ENCODE measurements at regions of chr10 and their contacts with region 1.

Region 1: GRCh38 chr10:13299437-13300287 is at the start of gene PHYH:
- DNase-seq: peak; percentile 88
- ATAC-seq: peak; percentile 71
- H3K4me3 ChIP-seq: peak within 1 kb of the TSS in 4 of 5 experiments; percentile 59 to 68 (median 66)
- H3K4me3 Mint-ChIP-seq: peak within 1 kb of the TSS; percentile 88
- H3K27ac ChIP-seq: peak within 1 kb of the TSS; percentile 66 to 71
- H3K27ac Mint-ChIP-seq: peak within 1 kb of the TSS; percentile 83
- H3K4me1 ChIP-seq: peaks cover 9 to 25% of the 10 kb centered on the region in 2 donors
- H3K4me1 Mint-ChIP-seq: peaks cover 20% of the 10 kb centered on the region
- H3K27me3 ChIP-seq: no peaks in the 10 kb centered on the region
- H3K27me3 Mint-ChIP-seq: no peaks in the 10 kb centered on the region
- CTCF ChIP-seq: no peak
- total RNA-seq, gene PHYH: 9.7 and 14.9 TPM in 2 replicates

Region 2: GRCh38 chr10:12264204-12264940 is 1035.3 kb before region 1 on chr10:
- CTCF ChIA-PET with region 1: no interaction called
- POLR2A ChIA-PET with region 1: interaction called, 14 read pairs
- intact Hi-C with region 1: no loop called
- DNase-seq: peak; percentile 99
- ATAC-seq: peak; percentile 89
- H3K4me3 ChIP-seq: peak overlapping the region in 4 of 5 experiments; percentile 18 to 34 (median 22)
- H3K4me3 Mint-ChIP-seq: peak overlapping the region; percentile 79
- H3K27ac ChIP-seq: peak overlapping the region; percentile 86 to 100
- H3K27ac Mint-ChIP-seq: peak overlapping the region; percentile 99
- H3K4me1 ChIP-seq: peaks cover 51 to 62% of the 10 kb centered on the region in 2 donors
- H3K4me1 Mint-ChIP-seq: peaks cover 50% of the 10 kb centered on the region
- H3K27me3 ChIP-seq: no peaks in the 10 kb centered on the region
- H3K27me3 Mint-ChIP-seq: no peaks in the 10 kb centered on the region
- CTCF ChIP-seq: peak; percentile 56

Region 3: DNA sequence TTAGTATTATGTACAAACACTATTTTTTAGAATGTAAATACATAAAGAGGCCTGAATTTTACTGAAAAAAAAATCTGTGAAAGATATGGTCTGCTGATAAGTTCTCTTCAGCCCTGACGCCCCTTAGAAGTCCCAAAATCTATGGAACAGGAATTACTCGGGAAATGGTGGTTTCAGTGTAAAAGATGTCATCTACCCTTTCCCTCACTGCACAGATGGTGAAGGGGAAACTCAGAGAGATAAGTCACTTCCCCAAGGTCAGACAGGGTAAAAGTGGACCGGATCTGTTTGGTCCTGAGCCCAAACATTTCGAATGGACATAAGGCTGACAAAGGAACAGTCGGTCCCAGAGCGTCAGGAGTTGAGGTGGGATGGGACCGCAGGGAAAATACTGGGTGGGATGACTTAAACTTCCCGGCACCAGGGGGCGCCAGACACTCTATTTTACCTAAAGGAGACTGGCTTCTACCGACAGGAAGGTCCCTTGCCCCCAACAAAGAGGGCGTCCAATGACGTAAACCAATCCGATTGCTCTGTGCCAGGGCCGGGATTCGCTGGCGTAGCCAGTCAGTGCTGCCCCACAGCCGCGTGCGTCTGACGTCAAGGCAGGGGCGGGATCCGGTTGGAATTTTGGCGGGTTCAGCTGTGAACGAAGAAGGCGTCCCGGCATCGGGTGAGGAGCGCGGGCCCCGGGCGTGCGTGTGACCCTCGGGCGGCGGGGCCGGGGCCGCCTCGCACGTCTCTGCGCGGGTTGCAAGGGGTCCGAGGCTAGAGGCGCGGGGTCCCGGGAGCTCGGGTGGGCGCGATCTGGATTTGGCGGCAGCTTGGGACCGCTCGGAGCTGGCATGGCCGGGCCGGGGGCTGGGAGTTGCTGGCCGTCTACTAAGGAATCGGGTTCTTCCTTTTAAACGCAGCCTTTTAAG is 138.5 kb before region 1 on chr10 and contains the start of gene MCM10:
- CTCF ChIA-PET with region 1: interaction called, 36 read pairs
- POLR2A ChIA-PET with region 1: interaction called, 5 read pairs
- intact Hi-C with region 1: loop called (anchors 1 kb)
- DNase-seq: peak; percentile 97
- ATAC-seq: peak; percentile 100
- H3K4me3 ChIP-seq: peak within 1 kb of the TSS; percentile 34 to 82 (median 63)
- H3K4me3 Mint-ChIP-seq: peak within 1 kb of the TSS; percentile 93
- H3K27ac ChIP-seq: peak within 1 kb of the TSS in 1 of 2 donors; percentile 54
- H3K27ac Mint-ChIP-seq: peak within 1 kb of the TSS; percentile 81
- H3K4me1 ChIP-seq: peaks cover 10 to 12% of the 10 kb centered on the region in 2 donors
- H3K4me1 Mint-ChIP-seq: peaks cover 14% of the 10 kb centered on the region
- H3K27me3 ChIP-seq: no peaks in the 10 kb centered on the region
- H3K27me3 Mint-ChIP-seq: no peaks in the 10 kb centered on the region
- CTCF ChIP-seq: peak; percentile 89
- total RNA-seq, gene MCM10: 0.15 and 0.42 TPM in 2 replicates

Region 4: GRCh38 chr10:13271552-13272163 is 28.0 kb before region 1 on chr10:
- CTCF ChIA-PET with region 1: interaction called, 14 read pairs
- POLR2A ChIA-PET with region 1: interaction called, 4 read pairs
- intact Hi-C with region 1: loop called (anchors 1 kb)
- DNase-seq: peak; percentile 49
- ATAC-seq: peak; percentile 73
- H3K4me3 ChIP-seq: peak overlapping the region in 2 of 5 experiments; percentile 9 to 22
- H3K4me3 Mint-ChIP-seq: peak overlapping the region; percentile 59
- H3K27ac ChIP-seq: no peak overlapping the region
- H3K27ac Mint-ChIP-seq: peak overlapping the region; percentile 53
- H3K4me1 ChIP-seq: no peaks in the 10 kb centered on the region
- H3K4me1 Mint-ChIP-seq: peaks cover 2% of the 10 kb centered on the region
- H3K27me3 ChIP-seq: no peaks in the 10 kb centered on the region
- H3K27me3 Mint-ChIP-seq: no peaks in the 10 kb centered on the region
- CTCF ChIP-seq: peak; percentile 46

Region 5: DNA sequence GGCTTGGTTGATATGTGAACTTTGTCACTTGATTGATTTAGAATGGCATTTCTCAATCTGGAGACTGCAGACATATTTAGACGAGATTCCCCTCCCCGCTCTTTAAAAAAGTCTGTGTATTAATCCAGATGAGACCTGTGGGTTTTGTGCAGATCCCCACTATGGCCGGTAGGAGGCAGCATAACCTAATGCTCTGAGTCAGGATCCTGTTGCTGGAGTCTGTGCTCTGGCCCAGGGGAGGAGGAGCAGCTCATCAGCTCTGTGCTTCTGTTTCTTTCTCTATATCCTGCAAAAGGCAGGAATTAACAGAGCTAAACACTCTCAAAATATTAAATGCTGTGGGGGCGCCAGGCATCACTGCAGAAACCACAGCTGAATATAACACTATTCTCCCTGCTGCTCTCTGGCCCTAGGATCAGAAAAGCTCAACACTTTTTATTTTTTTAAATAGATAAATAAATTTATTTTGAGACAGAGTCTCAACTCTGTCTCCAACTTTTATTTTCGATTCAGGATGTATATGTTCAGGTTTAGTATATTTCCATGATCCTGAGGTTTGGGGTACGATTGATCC is 72.3 kb after region 1 on chr10:
- CTCF ChIA-PET with region 1: no interaction called
- POLR2A ChIA-PET with region 1: no interaction called
- intact Hi-C with region 1: no loop called
- DNase-seq: peak; percentile 84
- ATAC-seq: peak; percentile 96
- H3K4me3 ChIP-seq: no peak overlapping the region
- H3K4me3 Mint-ChIP-seq: no peak overlapping the region
- H3K27ac ChIP-seq: no peak overlapping the region
- H3K27ac Mint-ChIP-seq: no peak overlapping the region
- H3K4me1 ChIP-seq: no peaks in the 10 kb centered on the region
- H3K4me1 Mint-ChIP-seq: no peaks in the 10 kb centered on the region
- H3K27me3 ChIP-seq: no peaks in the 10 kb centered on the region
- H3K27me3 Mint-ChIP-seq: peaks cover 4% of the 10 kb centered on the region
- CTCF ChIP-seq: peak; percentile 95

Region 6: DNA sequence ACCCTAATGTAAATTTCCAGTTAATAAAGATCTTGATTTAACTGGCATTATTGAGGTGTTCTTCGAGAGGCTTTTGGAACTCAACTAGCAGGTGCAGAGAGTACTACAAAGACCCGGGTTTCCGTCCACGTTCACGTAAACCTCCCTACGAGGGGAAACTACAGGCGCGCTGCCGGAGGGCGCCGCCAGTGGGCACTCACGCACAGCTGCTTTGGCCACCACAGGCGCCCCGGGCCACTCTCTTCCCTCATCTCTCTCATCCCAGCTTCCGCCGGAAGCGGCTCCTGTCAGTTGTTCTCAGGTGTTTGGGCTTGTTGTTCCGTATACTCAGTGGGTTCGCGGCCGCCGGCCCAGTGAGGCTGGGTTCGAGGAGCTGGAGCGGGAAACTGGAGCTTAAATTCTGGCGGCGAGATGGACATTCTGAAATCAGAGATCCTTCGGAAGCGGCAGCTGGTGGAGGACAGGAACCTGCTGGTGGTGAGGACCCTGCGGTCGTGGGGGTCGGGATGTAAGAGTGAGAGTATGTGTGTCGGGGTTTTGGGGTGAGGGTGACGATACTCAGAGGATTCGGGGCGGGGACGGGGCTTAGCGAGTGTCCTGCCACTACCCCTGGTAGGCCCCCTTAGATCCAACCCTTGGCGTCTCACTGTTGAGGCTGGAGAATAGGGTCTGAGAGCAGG is 287.2 kb after region 1 on chr10 and contains the start of gene PRPF18:
- CTCF ChIA-PET with region 1: no interaction called
- POLR2A ChIA-PET with region 1: interaction called, 4 read pairs
- intact Hi-C with region 1: loop called (anchors 1 kb)
- DNase-seq: peak; percentile 95
- ATAC-seq: peak; percentile 100
- H3K4me3 ChIP-seq: peak within 1 kb of the TSS; percentile 53 to 99 (median 84)
- H3K4me3 Mint-ChIP-seq: peak within 1 kb of the TSS; percentile 95
- H3K27ac ChIP-seq: peak within 1 kb of the TSS; percentile 0 to 85
- H3K27ac Mint-ChIP-seq: peak within 1 kb of the TSS; percentile 90
- H3K4me1 ChIP-seq: peaks cover 10 to 13% of the 10 kb centered on the region in 2 donors
- H3K4me1 Mint-ChIP-seq: peaks cover 31% of the 10 kb centered on the region
- H3K27me3 ChIP-seq: peaks cover 0 to 16% (median 2%) of the 10 kb centered on the region in 4 experiments
- H3K27me3 Mint-ChIP-seq: peaks cover 25% of the 10 kb centered on the region
- CTCF ChIP-seq: peak; percentile 99
- total RNA-seq, gene PRPF18: 28.9 and 31.8 TPM in 2 replicates